ENCODE measurements at regions of chr3 and their contacts with region 1.

Region 1: GRCh38 chr3:108221911-108222852 is at the start of gene IFT57:
- DNase-seq: peak; percentile 96 to 100 (median 98)

Region 2: GRCh38 chr3:108062051-108062450 is 160.1 kb before region 1 on chr3:
- intact Hi-C with region 1: no loop called
- DNase-seq: no peak

Region 3: DNA sequence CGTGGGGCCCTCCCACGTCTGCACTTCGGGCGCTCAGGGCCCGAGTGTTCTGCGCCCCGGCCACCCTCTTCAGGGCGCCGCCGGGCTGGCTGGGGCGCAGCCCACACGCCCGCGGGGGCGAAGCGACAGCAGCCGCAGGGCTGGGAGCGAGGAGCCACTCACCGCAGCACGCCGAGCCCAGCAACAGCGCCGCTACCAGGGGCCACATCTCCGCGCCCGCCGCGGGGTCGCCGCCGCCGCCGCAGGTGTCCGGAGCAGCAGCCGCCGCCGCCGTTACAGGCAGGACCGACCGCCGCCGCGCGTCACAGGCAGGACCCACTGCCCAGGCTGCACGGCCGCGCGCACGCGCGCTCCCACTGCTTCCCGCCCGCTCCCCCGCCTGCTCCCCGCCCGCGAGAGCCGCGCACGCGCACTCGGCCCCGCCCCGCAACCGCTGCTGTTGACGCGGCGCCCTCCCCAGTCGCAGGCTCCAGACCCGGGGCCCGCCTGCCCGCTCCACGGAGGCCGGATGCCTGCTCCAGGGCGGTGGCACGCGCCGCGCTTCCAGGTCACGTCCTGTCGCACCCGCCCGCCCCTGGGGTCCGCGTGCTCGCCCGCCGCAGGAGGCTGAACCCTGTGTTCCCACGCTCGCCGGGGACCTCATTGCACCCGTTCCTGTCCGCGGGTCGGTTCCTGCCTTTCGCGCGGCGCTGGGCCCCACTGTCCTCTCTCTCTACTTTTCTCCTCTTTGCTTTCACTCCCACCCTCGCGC is 131.3 kb before region 1 on chr3 and contains the start of gene CD47:
- intact Hi-C with region 1: loop called (anchors 2 kb)
- DNase-seq: peak; percentile 90 to 99 (median 93)

Region 4: DNA sequence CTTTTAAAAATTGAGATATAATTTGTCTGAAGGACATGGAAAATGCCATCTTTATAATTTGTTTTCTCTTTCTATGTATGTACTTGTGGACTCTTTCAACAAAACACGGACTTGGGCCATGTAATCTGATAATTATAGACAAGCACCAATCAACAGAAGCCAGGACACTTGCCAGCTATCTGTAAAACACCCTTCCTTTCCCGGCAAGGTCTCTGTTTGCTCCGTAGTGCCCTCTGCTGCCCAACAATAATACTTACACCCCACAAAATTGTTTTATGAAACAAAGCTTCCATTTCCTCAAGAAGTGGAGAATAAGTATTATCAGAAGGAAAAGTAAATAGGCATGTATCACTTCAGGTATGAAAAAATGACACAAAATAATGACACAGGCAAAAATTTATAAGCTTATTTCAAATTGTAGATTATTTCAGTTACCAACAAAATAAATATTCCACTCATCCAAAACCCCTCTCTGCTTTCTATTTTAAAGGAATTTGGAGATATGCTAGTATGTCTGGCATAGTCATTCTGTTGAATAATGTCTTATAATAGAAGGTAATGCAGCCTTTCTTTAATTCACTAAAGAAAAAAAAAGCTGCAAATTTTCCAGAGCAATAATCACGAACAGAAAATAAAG is 255.4 kb after region 1 on chr3:
- intact Hi-C with region 1: loop called (anchors 10 kb)
- DNase-seq: peak in 7 of 10 donors; percentile 23 to 84 (median 52)

Region 5: GRCh38 chr3:108513961-108514360 is 291.8 kb after region 1 on chr3:
- intact Hi-C with region 1: no loop called
- DNase-seq: no peak

Measured in posterior cingulate gyrus (tissue), 11 donors.